ENCODE measurements at regions of chr15 and their contacts with region 1.

Region 1: GRCh38 chr15:36029606-36030210 is 483.7 kb upstream of the DPH6 start:
- DNase-seq: no peak
- ATAC-seq: no peak
- H3K4me3 ChIP-seq: no peak overlapping the region
- H3K27ac ChIP-seq: no peak overlapping the region
- H3K4me1 ChIP-seq: no peaks in the 10 kb centered on the region
- H3K27me3 ChIP-seq: no peaks in the 10 kb centered on the region; a peak in 1 of 5 replicates
- CTCF ChIP-seq: no peak
- EP300 ChIP-seq: no peak
- POLR2A ChIP-seq: no peak
- RAD21 ChIP-seq: no peak

Region 2: GRCh38 chr15:36080759-36081158 is 51.1 kb after region 1 on chr15:
- CTCF ChIA-PET with region 1: no interaction called
- POLR2A ChIA-PET with region 1: no interaction called
- in situ Hi-C with region 1: no loop called
- intact Hi-C with region 1: loop called (anchors 10 kb)
- DNase-seq: no peak
- ATAC-seq: no peak
- H3K4me3 ChIP-seq: no peak overlapping the region
- H3K27ac ChIP-seq: no peak overlapping the region
- H3K4me1 ChIP-seq: no peaks in the 10 kb centered on the region
- H3K27me3 ChIP-seq: no peaks in the 10 kb centered on the region
- CTCF ChIP-seq: no peak
- EP300 ChIP-seq: no peak
- POLR2A ChIP-seq: no peak
- RAD21 ChIP-seq: no peak